ENCODE measurements at regions of chr22 and their contacts with region 1.

Region 1: GRCh38 chr22:23385291-23386244 is 194.5 kb downstream of the IGLL1 start:
- DNase-seq: peak; percentile 93
- H3K4me3 ChIP-seq: no peak overlapping the region; a peak in 1 of 4 replicates
- H3K27ac ChIP-seq: no peak overlapping the region
- H3K4me1 ChIP-seq: peaks cover 0 to 10% of the 10 kb centered on the region in 2 experiments; a peak in 1 of 4 replicates
- H3K27me3 ChIP-seq: no peaks in the 10 kb centered on the region
- CTCF ChIP-seq: peak; percentile 89
- EP300 ChIP-seq: no peak
- RAD21 ChIP-seq: peak; percentile 95

Region 2: GRCh38 chr22:23289851-23290724 is 95.5 kb before region 1 on chr22:
- CTCF ChIA-PET with region 1: interaction called, 15 read pairs
- POLR2A ChIA-PET with region 1: no interaction called
- DNase-seq: peak; percentile 89
- H3K4me3 ChIP-seq: no peak overlapping the region; a peak in 1 of 4 replicates
- H3K27ac ChIP-seq: no peak overlapping the region
- H3K4me1 ChIP-seq: no peaks in the 10 kb centered on the region; a peak in 1 of 4 replicates
- H3K27me3 ChIP-seq: no peaks in the 10 kb centered on the region
- CTCF ChIP-seq: peak; percentile 84
- EP300 ChIP-seq: no peak
- RAD21 ChIP-seq: peak; percentile 54

Region 3: GRCh38 chr22:23315341-23315917 is 70.1 kb before region 1 on chr22:
- CTCF ChIA-PET with region 1: interaction called, 33 read pairs
- POLR2A ChIA-PET with region 1: no interaction called
- DNase-seq: peak; percentile 79
- H3K4me3 ChIP-seq: no peak overlapping the region
- H3K27ac ChIP-seq: no peak overlapping the region
- H3K4me1 ChIP-seq: no peaks in the 10 kb centered on the region; a peak in 1 of 4 replicates
- H3K27me3 ChIP-seq: no peaks in the 10 kb centered on the region
- CTCF ChIP-seq: peak; percentile 63
- EP300 ChIP-seq: no peak
- RAD21 ChIP-seq: peak; percentile 76

Region 4: GRCh38 chr22:23368656-23369417 is 16.7 kb before region 1 on chr22:
- CTCF ChIA-PET with region 1: interaction called, 56 read pairs
- POLR2A ChIA-PET with region 1: no interaction called
- DNase-seq: no peak
- H3K4me3 ChIP-seq: no peak overlapping the region
- H3K27ac ChIP-seq: no peak overlapping the region
- H3K4me1 ChIP-seq: no peaks in the 10 kb centered on the region
- H3K27me3 ChIP-seq: peaks cover 5% of the 10 kb centered on the region; the same call in 1 of the 2 replicates
- CTCF ChIP-seq: no peak
- EP300 ChIP-seq: no peak
- RAD21 ChIP-seq: no peak

Region 5: GRCh38 chr22:23402275-23403151 is 16.9 kb after region 1 on chr22:
- CTCF ChIA-PET with region 1: interaction called, 31 read pairs
- POLR2A ChIA-PET with region 1: no interaction called
- DNase-seq: peak; percentile 96
- H3K4me3 ChIP-seq: peak overlapping the region in 1 of 2 experiments; percentile 45; a peak in 2 of 4 replicates
- H3K27ac ChIP-seq: peak overlapping the region in 1 of 2 experiments; percentile 82; a peak in 2 of 4 replicates
- H3K4me1 ChIP-seq: peaks cover 0 to 42% of the 10 kb centered on the region in 2 experiments; a peak in 1 of 4 replicates
- H3K27me3 ChIP-seq: no peaks in the 10 kb centered on the region
- CTCF ChIP-seq: peak; percentile 54
- EP300 ChIP-seq: no peak
- RAD21 ChIP-seq: peak; percentile 79

Region 6: GRCh38 chr22:23539135-23539838 is 153.7 kb after region 1 on chr22:
- CTCF ChIA-PET with region 1: interaction called, 17 read pairs
- POLR2A ChIA-PET with region 1: no interaction called
- DNase-seq: peak; percentile 71
- H3K4me3 ChIP-seq: peak overlapping the region in 1 of 2 experiments; percentile 41; a peak in 1 of 4 replicates
- H3K27ac ChIP-seq: peak overlapping the region in 1 of 2 experiments; percentile 47; a peak in 1 of 4 replicates
- H3K4me1 ChIP-seq: peaks cover 5 to 14% of the 10 kb centered on the region in 2 experiments; a peak in 3 of 4 replicates
- H3K27me3 ChIP-seq: no peaks in the 10 kb centered on the region
- CTCF ChIP-seq: peak; percentile 95
- EP300 ChIP-seq: no peak
- RAD21 ChIP-seq: peak; percentile 87

Measured in SK-N-SH (cell line).